ENCODE measurements at regions of chr12 and their contacts with region 1.

Region 1: DNA sequence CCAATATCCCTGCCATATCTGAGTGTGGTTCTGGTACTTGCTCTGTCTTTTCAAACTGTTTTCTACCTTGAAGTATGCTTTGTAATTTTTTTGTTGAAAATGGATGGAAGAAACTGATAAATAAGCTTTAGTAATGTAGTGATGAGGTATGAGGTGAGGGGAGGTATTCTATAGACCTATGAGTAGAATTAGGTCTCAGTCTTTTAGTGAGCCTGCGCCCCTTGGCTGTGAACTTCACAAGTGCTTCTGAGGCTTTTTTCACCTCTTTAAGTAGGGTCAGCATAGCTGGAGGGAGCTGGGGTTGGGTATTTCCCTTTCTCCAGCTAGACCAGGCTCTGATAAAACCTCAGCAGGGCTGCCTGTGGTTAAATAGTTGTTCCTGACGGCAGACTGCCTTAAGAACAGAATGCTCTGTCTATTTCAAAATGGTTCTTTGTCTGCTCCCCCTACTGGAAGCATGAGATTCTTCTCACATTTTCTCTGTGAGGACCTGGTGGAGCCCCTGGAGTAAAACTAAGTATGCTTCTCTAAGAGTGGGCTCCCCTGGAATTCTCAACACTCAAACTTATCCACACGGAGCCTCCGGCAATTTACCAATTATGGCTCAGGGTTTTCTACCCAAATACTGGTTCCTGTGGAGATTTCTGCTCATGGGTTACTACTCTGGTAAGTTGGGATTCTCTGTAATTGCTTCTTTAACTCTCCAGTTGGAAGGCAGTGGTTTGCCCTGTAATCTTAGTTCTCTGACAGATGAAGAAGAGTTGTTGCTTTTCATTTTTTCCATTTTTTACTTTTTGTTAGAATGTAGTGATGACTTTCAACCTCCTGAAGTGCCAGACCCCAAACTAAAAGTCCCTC is 13.1 kb downstream of the KRT5 start:
- DNase-seq: peak; percentile 29
- H3K4me3 ChIP-seq: no peak overlapping the region
- H3K27ac ChIP-seq: no peak overlapping the region
- H3K4me1 ChIP-seq: no peaks in the 10 kb centered on the region
- CTCF ChIP-seq: peak; percentile 75

Region 2: DNA sequence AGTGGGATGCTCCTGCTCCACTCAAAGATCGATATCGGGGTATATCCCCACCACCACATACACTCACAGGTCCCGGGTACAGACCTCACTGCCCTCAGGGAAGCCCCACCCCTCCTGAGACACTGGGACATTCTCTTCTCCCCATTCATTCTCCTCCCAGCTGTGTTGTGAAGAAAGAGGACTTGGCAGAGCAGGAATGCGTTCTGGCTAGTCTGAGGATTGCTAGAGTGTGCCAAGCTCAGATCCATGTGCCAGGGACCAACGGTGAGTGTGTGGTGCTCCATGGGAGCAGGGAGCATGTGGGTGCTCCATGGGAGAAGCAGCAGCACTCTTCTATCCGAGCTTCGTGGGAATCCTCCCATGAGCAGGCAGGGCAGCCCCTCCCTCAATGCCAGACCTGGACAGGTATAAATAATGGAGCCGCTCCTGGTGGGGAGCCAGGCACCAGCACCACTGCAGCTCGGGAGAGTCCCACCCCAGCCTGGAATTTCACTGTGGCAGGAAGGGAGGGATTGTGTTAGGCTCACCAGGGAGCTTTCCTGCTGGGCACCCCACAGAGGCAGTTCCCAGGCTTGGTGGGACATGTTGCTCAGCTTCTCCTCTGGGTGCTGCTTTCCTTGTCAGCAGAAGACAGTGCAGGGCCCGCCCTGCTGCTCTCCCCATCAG is 15.4 kb after region 1 on chr12:
- CTCF ChIA-PET with region 1: no interaction called
- POLR2A ChIA-PET with region 1: no interaction called
- intact Hi-C with region 1: no loop called
- DNase-seq: no peak
- H3K4me3 ChIP-seq: no peak overlapping the region
- H3K27ac ChIP-seq: no peak overlapping the region
- H3K4me1 ChIP-seq: no peaks in the 10 kb centered on the region
- CTCF ChIP-seq: no peak

Region 3: DNA sequence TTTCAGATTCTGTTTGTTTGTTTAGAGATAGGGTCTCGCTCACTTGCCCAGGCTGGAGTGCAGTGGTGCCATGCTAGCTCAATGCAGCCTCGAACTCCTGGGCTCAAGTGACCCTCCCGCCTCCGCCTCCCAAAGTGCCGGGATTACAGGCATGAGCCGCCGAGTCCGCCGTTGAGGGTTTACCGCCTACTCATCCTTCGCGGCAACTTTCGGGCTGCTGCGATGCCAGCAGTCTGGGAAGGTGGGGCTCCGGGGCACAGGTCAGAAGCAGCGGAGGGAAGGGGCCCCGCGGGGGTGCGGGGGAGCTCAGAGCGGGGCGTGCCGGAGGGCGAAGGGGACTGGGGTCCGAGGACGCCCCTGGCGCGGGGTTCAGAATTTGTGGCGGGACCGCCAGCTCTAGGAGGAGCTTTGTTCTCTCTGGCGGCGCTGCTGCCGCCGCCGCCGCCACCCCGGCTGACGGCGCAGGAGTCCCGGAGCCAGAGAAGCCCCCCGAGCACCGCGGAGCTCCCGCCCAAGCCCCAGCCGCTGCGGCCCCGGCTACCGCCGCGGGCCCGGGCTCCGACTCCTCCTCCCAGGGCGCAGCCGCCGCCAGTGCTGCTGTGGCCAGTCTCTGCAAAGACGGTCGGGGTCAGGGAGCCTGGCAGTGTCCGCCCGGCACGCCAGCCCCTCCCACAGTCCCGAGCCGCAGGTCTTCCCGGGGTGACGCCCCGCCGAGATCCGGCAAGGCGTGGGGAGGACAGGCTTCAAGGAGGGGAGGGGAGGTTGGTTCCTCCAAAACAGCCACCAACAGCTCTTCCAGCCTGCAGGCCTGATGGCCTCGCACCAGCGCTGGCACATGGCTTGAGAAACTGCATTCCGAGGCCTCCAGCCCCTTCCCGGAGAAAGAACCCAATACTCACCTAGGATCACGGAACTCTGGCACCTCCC is 207.1 kb after region 1 on chr12:
- CTCF ChIA-PET with region 1: no interaction called
- POLR2A ChIA-PET with region 1: interaction called, 10 read pairs
- intact Hi-C with region 1: no loop called
- DNase-seq: no peak
- H3K4me3 ChIP-seq: no peak overlapping the region
- H3K27ac ChIP-seq: no peak overlapping the region
- H3K4me1 ChIP-seq: no peaks in the 10 kb centered on the region
- CTCF ChIP-seq: no peak

Measured in OCI-LY7 (cell line).